Activated CD4-positive, alpha-beta T cell treated with anti-CD3 and anti-CD28 coated beads, Interleukin-2, amount 10 ng/mL, durations not matched to agents 24 days and 14 days (primary cell): ENCODE measurements at regions of chr10 and their contacts with region 1.

Region 1: GRCh38 chr10:100518761-100519241 is 860 bp downstream of the SEC31B start:
- DNase-seq: peak; percentile 92
- H3K4me3 Mint-ChIP-seq: no peak overlapping the region
- H3K27ac Mint-ChIP-seq: peak overlapping the region; percentile 34
- H3K4me1 Mint-ChIP-seq: peaks cover 34% of the 10 kb centered on the region
- H3K27me3 Mint-ChIP-seq: no peaks in the 10 kb centered on the region

Region 2: GRCh38 chr10:100291356-100291755 is 227.4 kb before region 1 on chr10:
- intact Hi-C with region 1: no loop called
- DNase-seq: no peak
- H3K4me3 Mint-ChIP-seq: no peak overlapping the region
- H3K27ac Mint-ChIP-seq: no peak overlapping the region
- H3K4me1 Mint-ChIP-seq: peaks cover 6% of the 10 kb centered on the region
- H3K27me3 Mint-ChIP-seq: peaks cover 21% of the 10 kb centered on the region

Region 3: DNA sequence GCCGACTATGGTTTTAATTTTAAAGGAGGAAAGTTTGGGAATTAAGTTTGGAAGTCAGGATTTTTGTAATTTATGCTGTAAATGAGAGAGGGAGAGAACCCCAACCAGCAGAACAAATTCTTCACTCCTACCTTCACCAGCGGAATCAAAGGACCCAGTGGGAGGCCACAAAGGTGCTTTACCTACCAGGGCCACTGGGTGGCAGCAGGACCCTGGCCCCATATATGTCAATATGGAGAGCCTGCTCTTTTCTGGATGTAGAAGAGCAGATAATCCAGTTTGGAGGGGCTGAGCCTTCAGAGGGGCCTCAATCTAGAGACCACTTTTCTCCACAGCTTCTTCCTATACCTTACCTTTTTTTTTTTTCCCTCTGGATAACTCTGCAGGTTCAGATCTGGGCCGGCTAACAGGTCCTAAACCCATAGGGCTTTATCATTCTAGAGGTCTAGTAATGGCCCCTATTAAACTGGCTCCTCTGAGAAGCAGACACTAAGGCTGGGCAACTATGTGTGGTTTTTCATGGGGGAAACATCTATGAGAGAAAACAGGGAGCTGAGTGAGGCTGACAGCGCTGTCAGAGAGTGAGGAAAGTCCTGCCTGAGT is 180.3 kb before region 1 on chr10:
- intact Hi-C with region 1: loop called (anchors 1 kb)
- DNase-seq: peak; percentile 95
- H3K4me3 Mint-ChIP-seq: no peak overlapping the region
- H3K27ac Mint-ChIP-seq: peak overlapping the region; percentile 27
- H3K4me1 Mint-ChIP-seq: peaks cover 24% of the 10 kb centered on the region
- H3K27me3 Mint-ChIP-seq: peaks cover 12% of the 10 kb centered on the region

Region 4: DNA sequence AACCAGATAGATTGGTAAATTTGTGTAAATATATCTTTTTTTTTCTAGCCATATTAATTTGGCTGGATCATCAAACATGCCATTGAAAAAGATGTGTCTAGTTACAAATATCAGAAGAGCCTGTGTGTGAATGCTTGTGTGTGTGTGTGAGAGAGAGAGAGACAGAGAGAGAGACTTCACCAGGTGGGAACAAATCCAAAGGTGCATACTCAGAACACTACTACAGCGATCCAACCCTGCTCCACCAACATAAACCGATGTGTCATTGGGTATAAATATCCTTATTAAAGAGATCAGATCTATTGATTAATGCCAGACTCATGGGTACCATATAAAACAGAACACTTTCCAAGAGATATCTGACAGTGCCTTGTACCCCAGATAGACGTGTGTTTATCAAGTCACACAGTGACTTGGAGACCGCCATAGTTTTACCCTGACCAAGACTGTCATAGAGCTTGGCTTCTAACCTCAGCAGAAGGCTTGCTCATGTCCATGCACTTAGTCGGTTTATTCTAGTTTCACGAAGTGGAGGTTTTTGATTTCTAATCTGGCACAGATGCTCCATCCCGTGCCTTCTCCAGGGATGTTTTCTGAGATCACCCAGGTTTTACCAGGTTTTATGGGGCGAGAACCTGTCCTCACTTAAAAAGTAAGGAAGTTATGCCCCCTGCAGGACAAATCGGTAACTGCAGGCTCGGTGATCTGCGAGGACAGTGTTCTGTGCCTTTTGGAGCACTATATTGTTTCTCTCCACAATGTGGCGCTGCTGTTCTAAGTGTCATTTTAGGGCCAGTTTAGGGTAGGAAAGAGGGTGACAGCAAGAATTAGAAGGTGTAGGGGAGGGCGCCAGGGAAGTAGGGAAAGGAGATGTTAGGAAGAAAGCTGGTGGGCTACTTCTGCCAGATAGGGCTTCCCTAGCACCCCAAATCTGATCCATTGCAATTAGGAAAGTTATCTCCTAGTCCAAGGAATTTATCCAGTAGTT is 85.3 kb before region 1 on chr10:
- intact Hi-C with region 1: loop called (anchors 1 kb)
- DNase-seq: peak; percentile 99
- H3K4me3 Mint-ChIP-seq: no peak overlapping the region
- H3K27ac Mint-ChIP-seq: peak overlapping the region; percentile 17
- H3K4me1 Mint-ChIP-seq: peaks cover 12% of the 10 kb centered on the region
- H3K27me3 Mint-ChIP-seq: no peaks in the 10 kb centered on the region

Region 5: GRCh38 chr10:100481462-100482081 is 37.2 kb before region 1 on chr10:
- intact Hi-C with region 1: loop called (anchors 2 kb)
- DNase-seq: peak; percentile 98
- H3K4me3 Mint-ChIP-seq: peak overlapping the region; percentile 86
- H3K27ac Mint-ChIP-seq: no peak overlapping the region
- H3K4me1 Mint-ChIP-seq: peaks cover 28% of the 10 kb centered on the region
- H3K27me3 Mint-ChIP-seq: peaks cover 3% of the 10 kb centered on the region

Region 6: DNA sequence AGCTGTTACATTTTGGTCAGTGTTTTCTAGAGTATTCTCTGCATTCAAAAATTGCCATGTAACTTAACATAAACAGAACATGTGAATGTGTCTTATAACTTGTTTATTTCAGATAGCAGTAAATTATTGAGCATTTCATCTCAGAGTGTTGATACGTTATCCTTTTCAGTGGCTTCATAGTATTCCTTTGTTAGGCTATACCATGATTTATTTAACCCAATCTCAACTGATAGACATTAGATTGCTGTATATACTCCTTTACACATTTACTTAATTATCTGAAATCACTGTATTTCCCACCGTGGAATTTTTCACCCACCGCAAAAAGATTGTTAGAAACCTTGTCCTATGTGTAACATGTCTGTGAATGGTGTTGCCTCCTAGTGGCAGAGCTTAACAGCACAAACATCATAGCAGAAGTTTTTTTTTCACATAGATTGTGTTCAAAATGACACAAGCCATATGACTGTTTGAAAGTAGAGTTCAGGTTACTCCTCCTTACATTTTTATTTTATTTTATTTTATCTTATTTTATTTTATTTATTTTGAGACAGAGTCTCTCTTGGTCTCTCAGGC is 415.4 kb after region 1 on chr10:
- intact Hi-C with region 1: no loop called
- DNase-seq: no peak
- H3K4me3 Mint-ChIP-seq: no peak overlapping the region
- H3K27ac Mint-ChIP-seq: no peak overlapping the region
- H3K4me1 Mint-ChIP-seq: peaks cover 2% of the 10 kb centered on the region
- H3K27me3 Mint-ChIP-seq: no peaks in the 10 kb centered on the region